ENCODE measurements at regions of chr20 and their contacts with region 1.

Region 1: GRCh38 chr20:36736451-36737182 is 9.3 kb downstream of the NDRG3 start:
- DNase-seq: no peak
- H3K4me3 ChIP-seq: no peak overlapping the region
- H3K27ac ChIP-seq: no peak overlapping the region
- H3K4me1 ChIP-seq: no peaks in the 10 kb centered on the region
- H3K27me3 ChIP-seq: no peaks in the 10 kb centered on the region
- CTCF ChIP-seq: no peak

Region 2: DNA sequence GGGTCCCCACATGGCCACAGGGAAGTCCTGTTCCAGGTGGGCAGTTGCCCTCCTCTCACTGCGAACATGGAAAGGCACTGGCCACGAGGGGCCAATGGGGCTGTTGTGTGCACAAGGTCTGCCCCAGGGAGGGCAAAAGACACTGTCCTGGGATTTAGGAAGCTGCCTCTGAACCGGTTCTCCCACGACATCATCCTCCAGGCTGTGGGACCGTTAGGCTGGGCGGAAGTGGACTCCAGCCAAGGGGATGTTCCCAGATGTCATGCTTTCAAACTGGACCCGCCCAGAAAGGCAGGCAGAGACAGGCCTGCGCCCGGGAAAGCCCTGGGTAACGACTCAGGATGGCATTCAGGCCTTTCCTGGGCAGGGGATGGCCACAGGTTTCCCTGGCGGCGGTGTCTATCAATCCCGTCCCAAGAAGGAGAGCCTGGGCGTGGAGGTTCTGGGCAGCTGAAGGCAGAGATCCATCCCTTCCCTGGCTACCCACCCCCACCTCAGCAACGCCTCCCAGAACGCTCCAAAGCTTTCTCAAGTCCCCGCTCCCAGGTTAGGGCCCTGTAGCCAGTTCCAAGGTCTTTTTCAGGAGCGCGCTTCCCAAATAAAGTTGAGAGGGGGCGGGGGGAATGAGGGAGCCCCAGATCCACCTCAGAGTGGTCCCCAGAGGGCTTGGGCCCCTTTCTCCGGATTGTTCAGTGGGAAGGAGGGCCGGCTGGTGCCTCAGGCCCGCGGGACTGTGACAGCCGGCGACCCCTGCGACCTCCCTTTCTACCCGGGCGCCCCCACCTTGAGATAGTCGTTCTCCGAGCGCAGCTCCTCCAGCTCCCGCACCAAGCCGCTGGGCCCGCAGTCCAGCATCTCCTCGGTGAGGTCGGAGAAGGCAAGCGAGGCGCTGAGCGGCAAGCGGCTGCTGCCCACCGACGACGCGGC is 125.5 kb after region 1 on chr20:
- CTCF ChIA-PET with region 1: no interaction called
- POLR2A ChIA-PET with region 1: no interaction called
- intact Hi-C with region 1: no loop called
- DNase-seq: peak; percentile 81
- H3K4me3 ChIP-seq: peak overlapping the region; percentile 59
- H3K27ac ChIP-seq: peak overlapping the region; percentile 72
- H3K4me1 ChIP-seq: peaks cover 16% of the 10 kb centered on the region
- H3K27me3 ChIP-seq: no peaks in the 10 kb centered on the region
- CTCF ChIP-seq: no peak

Region 3: GRCh38 chr20:36941401-36941835 is 204.8 kb after region 1 on chr20:
- CTCF ChIA-PET with region 1: no interaction called
- POLR2A ChIA-PET with region 1: interaction called, 23 read pairs
- intact Hi-C with region 1: no loop called
- DNase-seq: peak; percentile 35
- H3K4me3 ChIP-seq: no peak overlapping the region
- H3K27ac ChIP-seq: no peak overlapping the region
- H3K4me1 ChIP-seq: peaks cover 22% of the 10 kb centered on the region
- H3K27me3 ChIP-seq: no peaks in the 10 kb centered on the region
- CTCF ChIP-seq: no peak

Region 4: DNA sequence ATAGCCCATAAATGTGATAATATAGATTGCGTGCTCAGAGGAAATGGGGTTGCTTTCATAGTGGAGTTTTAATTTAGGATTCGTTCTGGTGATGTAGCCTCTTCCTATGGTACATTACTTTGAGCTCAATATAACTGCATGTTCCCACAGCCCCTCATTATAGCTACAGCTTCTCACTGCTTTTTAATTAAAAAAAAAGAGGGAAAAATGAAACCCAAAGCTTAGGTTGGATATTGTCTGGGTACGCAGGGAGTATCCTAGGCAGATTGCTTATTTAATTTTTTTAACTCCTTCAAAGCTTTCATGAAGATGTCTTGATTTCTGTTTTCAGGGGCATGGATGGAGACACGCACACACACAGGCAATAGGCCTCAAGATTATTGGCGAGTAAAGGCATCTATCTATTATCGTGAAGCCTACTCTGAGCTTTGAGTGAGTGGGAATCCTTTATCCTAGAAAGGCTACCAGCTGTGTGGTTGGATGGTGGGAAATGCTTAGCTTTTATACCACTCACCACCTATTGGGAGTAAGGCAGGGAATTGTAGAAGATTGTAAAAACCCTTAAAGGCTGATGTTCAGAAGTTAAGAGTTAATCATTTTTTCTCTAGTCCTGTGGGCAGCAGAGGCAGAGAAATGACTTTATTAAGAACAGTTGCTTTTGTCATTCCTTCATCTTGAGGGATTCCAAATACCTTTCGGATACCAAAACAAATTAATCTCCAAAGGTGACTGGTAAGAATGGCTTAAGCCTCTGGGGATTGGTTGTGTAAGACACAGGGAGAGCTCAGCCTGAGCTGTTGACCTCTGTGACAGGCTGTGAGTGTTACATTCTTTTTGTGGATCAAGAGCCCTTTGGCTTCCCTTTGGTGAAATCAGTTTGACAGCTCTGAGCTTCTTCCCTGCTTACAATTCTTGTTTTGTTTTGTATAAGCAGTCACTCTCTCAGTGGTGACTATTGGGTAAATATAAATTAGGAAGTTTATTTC is 990.6 kb after region 1 on chr20:
- CTCF ChIA-PET with region 1: no interaction called
- POLR2A ChIA-PET with region 1: no interaction called
- intact Hi-C with region 1: no loop called
- DNase-seq: peak; percentile 52
- H3K4me3 ChIP-seq: no peak overlapping the region
- H3K27ac ChIP-seq: peak overlapping the region; percentile 37
- H3K4me1 ChIP-seq: peaks cover 48% of the 10 kb centered on the region
- H3K27me3 ChIP-seq: no peaks in the 10 kb centered on the region
- CTCF ChIP-seq: no peak

Measured in A673 (cell line).